Mucosa of descending colon (tissue), 3 donors: ENCODE measurements at regions of chr20 and their contacts with region 1.

Region 1: DNA sequence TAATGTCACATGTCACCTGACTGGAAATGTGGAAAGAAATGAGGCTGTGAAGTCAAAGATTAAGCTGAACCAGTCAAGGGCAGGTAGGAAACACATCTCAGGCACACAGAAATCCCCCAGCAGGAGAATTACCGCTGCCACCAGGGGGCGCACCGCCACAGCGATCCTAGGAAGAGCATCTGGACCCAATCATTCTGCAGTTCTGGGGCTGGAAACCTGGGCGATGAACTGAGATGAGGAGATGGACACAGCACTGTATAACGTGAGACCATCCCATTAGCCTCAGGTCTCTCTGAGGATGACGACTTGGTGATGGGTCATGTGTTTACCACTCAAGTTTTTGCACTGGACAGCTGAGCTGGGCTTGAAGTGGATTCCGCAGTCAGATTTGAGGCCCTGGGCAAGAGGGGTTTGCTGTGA is 6.5 kb upstream of the SLC24A3 start:
- DNase-seq: peak; percentile 65 to 88 (median 88)
- ATAC-seq: peak; percentile 87
- H3K4me3 ChIP-seq: no peak overlapping the region
- H3K4me1 ChIP-seq: no peaks in the 10 kb centered on the region
- CTCF ChIP-seq: peak; percentile 75

Region 2: DNA sequence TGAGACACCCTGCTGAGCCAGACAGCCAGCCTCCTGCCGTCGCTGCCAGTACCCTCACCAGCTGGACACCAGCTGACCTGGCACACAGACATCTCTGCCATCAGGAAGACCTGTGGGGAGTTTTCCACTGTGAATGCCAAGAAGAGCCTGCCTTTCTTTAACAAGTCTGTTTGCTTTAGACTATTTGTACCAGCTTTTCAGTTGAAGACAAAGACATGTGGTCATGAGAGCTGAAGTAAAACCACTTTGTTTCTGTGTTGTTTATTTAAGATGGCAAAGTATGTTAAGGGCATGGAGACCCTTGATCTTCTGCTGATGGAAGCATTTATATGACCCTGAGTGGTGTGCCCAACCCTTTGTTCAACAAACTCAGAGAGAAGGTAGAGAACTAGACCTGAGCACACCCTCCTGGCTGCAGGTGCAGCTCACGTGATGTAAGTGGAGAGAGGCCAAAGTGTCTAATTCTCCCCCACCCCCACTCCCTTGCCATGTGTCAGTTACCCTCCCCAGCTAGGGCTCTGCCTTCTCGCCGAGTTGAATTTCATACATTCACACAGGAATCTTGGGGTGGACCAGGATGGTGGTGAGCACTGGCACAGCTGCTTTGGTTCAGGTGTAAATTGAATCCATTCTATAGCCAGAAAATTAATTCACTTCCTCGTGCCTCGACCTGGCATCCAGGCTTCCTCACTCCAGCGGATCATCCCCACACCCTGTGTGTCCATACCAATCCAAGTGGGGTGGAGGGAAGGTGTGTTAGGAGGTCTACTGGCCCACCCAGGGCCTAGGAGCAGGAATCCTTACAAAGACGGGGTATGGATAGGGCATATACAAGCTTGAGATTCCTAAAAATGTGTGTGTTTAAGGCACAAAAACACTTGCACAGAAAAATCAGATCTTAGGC is 75.7 kb before region 1 on chr20:
- intact Hi-C with region 1: no loop called
- DNase-seq: peak; percentile 69 to 83 (median 69)
- ATAC-seq: peak; percentile 96
- H3K4me3 ChIP-seq: no peak overlapping the region
- H3K4me1 ChIP-seq: peaks cover 12% of the 10 kb centered on the region
- CTCF ChIP-seq: no peak

Region 3: GRCh38 chr20:19327401-19327800 is 121.4 kb after region 1 on chr20:
- intact Hi-C with region 1: no loop called
- DNase-seq: no peak
- ATAC-seq: no peak
- H3K4me3 ChIP-seq: no peak overlapping the region
- H3K4me1 ChIP-seq: no peaks in the 10 kb centered on the region
- CTCF ChIP-seq: no peak

Region 4: DNA sequence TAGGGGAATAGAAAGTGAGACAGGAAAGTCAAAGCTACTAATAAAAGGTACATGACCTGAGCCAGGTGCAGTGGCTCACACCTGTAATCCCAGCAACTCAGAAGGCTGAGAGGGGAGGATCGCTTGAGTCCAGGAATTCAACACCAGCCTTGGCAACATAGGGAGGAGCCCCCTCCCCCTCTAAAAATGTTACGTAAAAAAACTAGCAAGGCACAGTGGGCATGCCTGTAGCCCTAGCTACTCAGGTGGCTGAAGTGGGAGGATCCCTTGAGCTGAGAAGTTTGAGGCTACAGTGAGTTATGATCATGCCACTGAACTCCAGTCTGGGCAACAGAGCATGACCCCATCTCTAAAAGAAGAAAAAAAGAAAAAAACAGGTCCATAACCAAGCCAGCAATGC is 366.0 kb after region 1 on chr20:
- intact Hi-C with region 1: loop called in 1 of 2 experiments (anchors 10 kb)
- DNase-seq: no peak
- ATAC-seq: no peak
- H3K4me3 ChIP-seq: no peak overlapping the region
- H3K4me1 ChIP-seq: no peaks in the 10 kb centered on the region
- CTCF ChIP-seq: no peak

Region 5: GRCh38 chr20:19583532-19584175 is 377.7 kb after region 1 on chr20:
- intact Hi-C with region 1: loop called (anchors 2 to 10 kb)
- DNase-seq: peak in 2 of 3 donors; percentile 82 to 83
- ATAC-seq: peak; percentile 86
- H3K4me3 ChIP-seq: no peak overlapping the region
- H3K4me1 ChIP-seq: no peaks in the 10 kb centered on the region
- CTCF ChIP-seq: peak; percentile 62

Region 6: DNA sequence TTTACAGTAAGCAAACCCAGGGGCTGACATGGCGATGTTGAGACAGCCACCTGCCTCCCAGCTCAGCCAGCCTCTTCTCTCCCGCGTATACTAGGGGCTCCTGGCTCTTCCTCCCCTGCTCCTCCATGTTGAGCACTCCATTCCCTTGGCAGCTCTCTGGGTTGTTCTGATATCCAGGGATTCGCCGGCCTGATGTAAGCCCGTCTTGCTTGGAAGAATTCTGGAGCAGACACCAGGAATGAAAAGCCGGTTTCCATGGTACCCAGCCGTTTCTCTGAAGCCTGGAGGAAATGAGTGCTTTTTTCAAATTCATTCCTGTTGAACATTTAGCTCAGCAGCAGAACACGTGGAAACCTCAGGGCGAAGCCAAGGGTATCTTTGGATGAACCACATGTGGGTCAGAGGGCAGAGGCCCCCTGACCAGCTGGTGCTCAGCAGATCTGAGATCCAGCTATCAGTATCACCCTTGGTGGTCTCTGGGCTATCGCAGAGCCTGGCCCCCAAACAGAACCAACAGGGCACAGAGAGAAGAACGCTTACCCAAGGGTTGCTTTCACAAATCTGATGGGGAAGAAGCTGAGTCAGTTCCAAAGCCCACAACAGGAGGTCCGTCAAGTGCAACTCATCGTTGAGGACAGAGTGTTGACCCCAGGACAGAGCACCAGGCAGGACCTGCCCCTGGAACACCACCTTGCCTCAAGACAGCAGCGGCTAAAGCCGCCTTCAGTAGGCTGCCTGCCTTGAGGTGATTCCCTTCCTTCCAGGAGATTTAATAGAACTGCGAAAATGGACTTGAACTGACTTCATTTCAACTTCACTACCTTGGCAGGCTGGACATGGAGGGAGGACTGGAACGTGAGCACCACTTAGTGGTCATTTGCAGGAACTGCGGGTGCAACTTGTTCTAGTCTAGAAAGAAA is 456.0 kb after region 1 on chr20:
- intact Hi-C with region 1: loop called in 1 of 2 experiments (anchors 10 kb)
- DNase-seq: peak in 2 of 3 donors; percentile 62 to 80
- ATAC-seq: peak; percentile 82
- H3K4me3 ChIP-seq: no peak overlapping the region
- H3K4me1 ChIP-seq: no peaks in the 10 kb centered on the region
- CTCF ChIP-seq: peak; percentile 96